Sciatic nerve (tissue), 2 donors: ENCODE measurements at regions of chr1 and their contacts with region 1.

Region 1: GRCh38 chr1:27102707-27103491 is 52.0 kb downstream of the SLC9A1 start:
- DNase-seq: peak; percentile 90
- ATAC-seq: peak; percentile 61

Region 2: DNA sequence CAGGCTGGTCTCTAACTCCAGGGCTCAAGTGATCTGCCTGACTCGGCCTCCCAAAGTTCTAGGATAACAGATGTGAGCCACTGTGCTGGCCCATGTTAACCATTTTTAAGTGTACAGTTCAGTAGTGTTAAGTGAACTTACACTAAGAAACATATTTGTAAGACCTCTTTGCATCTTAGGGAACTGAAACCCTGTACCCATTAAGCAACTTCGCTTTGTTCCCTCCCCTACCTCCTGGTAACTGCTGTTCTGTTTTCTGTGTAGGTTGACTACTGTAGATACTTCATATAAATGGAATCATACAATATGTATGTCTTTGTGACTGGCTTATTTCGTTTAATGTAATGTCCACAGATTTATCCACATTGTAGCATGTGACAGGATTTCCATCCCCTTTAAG is 170.4 kb before region 1 on chr1:
- intact Hi-C with region 1: no loop called
- DNase-seq: no peak
- ATAC-seq: no peak

Region 3: DNA sequence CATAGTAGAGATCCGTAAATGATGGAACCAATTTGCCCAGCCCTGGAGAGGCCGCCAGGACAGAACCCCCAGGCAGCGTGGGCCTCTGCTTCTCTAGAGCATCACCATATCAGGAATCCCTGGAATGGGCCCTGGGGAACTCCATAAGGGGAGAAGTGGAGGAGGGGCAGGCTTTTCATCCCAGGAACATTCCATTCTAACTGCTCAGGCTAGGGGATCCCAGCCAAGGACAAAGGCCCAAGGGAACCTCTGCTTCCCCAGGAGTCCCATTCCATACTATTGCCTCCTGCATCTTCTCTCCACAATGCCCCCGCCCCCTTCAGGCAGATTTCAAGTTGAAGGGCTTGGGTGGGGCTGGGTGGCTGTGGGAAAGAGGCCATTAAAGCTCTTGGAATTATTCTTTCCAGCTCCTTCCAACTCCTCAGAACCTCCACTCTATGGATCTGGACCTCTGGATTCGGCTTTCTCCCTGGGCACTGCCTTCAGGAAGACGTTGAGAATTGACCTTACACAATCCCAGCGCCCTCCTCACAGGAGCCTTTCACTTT is 103.4 kb before region 1 on chr1:
- intact Hi-C with region 1: loop called (anchors 5 kb)
- DNase-seq: no peak
- ATAC-seq: peak; percentile 65

Region 4: GRCh38 chr1:27284425-27285273 is 181.8 kb after region 1 on chr1:
- intact Hi-C with region 1: loop called (anchors 5 kb)
- DNase-seq: peak; percentile 95
- ATAC-seq: peak; percentile 89